GM12878 (cell line): ENCODE measurements at regions of chr2 and their contacts with region 1.

Region 1: DNA sequence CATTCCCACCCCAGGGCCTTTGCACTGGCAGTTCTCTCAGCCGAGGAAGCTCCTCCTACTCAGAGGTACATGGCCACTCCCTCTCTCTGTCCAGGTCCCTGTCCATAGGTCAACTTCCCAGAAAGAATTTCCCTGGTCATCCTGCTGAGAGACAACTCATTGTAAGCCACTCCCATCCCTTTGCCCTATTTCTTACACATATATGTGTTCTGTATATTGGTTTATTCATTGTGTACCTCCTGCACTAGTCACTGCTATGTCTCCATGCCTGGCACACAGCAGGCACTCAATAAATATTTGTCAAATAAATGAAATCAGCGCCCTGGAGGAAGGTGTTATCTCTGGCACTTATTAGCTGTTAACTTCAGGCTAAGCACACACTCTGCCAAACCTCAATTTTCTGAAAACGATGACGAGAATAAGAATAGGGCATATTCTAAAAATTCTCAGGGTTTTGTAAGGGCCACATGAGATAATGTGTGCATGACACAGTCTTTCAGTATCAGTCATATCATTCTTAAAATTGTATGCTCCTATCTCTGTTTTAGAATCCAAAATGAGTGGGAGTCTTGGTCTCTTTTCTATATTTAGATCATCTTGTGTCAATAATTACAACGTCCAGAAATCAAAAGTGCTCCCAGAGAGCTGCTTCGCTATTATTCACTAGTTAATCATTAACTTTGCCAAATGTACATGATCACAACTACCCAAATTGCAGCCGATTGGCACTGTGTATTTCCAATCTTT is 198.0 kb downstream of the ALK start:
- DNase-seq: peak; percentile 37
- ATAC-seq: peak; percentile 92
- H3K4me3 ChIP-seq: no peak overlapping the region
- H3K27ac ChIP-seq: no peak overlapping the region
- H3K4me1 ChIP-seq: no peaks in the 10 kb centered on the region; the same call in 1 of the 2 replicates
- H3K27me3 ChIP-seq: no peaks in the 10 kb centered on the region
- CTCF ChIP-seq: no peak
- EP300 ChIP-seq: peak; percentile 65 to 79; a peak in 3 of 4 replicates
- POLR2A ChIP-seq: no peak
- RAD21 ChIP-seq: no peak

Region 2: DNA sequence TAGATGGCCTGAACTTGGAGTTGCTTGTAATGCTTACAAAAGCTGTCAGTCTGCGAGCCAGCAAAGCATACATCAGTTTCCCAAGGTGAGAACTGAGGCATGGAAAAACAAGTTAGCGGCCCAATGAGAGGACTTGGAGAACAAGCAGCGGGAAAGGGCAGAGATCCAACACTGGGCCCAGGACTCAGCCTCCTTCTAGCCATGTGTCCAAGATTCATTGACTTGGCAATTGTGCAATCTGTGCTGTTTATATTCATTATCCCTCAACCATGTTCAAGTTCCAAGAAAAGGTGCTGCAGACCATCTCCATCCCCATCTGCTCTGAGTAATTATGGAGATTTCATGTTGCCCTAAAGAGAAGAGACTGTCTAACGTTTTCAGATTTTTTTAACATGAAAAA is 10.5 kb after region 1 on chr2:
- CTCF ChIA-PET with region 1: no interaction called
- POLR2A ChIA-PET with region 1: no interaction called
- RAD21 ChIA-PET with region 1: no interaction called
- SMC1A ChIA-PET with region 1: no interaction called
- in situ Hi-C with region 1: no loop called
- intact Hi-C with region 1: no loop called
- DNase-seq: no peak
- ATAC-seq: no peak
- H3K4me3 ChIP-seq: no peak overlapping the region
- H3K27ac ChIP-seq: no peak overlapping the region
- H3K4me1 ChIP-seq: no peaks in the 10 kb centered on the region
- H3K27me3 ChIP-seq: no peaks in the 10 kb centered on the region
- CTCF ChIP-seq: no peak
- EP300 ChIP-seq: no peak
- POLR2A ChIP-seq: no peak
- RAD21 ChIP-seq: no peak

Region 3: GRCh38 chr2:29749843-29750242 is 26.4 kb after region 1 on chr2:
- CTCF ChIA-PET with region 1: no interaction called
- POLR2A ChIA-PET with region 1: no interaction called
- RAD21 ChIA-PET with region 1: interaction called, 3 read pairs
- SMC1A ChIA-PET with region 1: interaction called, 11 read pairs
- in situ Hi-C with region 1: no loop called
- intact Hi-C with region 1: no loop called
- DNase-seq: no peak
- ATAC-seq: no peak
- H3K4me3 ChIP-seq: no peak overlapping the region
- H3K27ac ChIP-seq: no peak overlapping the region
- H3K4me1 ChIP-seq: peaks cover 3% of the 10 kb centered on the region; the same call in 1 of the 2 replicates
- H3K27me3 ChIP-seq: 0 out of 4 replicates have a peak, but pooled peaks cover 0 to 2% of the 10 kb centered on the region in 2 experiments
- CTCF ChIP-seq: no peak
- EP300 ChIP-seq: no peak
- POLR2A ChIP-seq: no peak
- RAD21 ChIP-seq: no peak

Region 4: GRCh38 chr2:29802986-29803385 is 79.6 kb after region 1 on chr2:
- CTCF ChIA-PET with region 1: no interaction called
- POLR2A ChIA-PET with region 1: no interaction called
- RAD21 ChIA-PET with region 1: no interaction called
- SMC1A ChIA-PET with region 1: no interaction called
- in situ Hi-C with region 1: no loop called
- intact Hi-C with region 1: no loop called
- DNase-seq: no peak
- ATAC-seq: no peak
- H3K4me3 ChIP-seq: no peak overlapping the region
- H3K27ac ChIP-seq: no peak overlapping the region
- H3K4me1 ChIP-seq: no peaks in the 10 kb centered on the region
- H3K27me3 ChIP-seq: no peaks in the 10 kb centered on the region
- CTCF ChIP-seq: no peak
- EP300 ChIP-seq: no peak
- POLR2A ChIP-seq: no peak
- RAD21 ChIP-seq: no peak